AG04449 (cell line): ENCODE measurements at regions of chr5 and their contacts with region 1.

Region 1: GRCh38 chr5:143002459-143003328 is 232.5 kb downstream of the ARHGAP26 start:
- DNase-seq: peak; percentile 41
- H3K4me3 ChIP-seq: no peak overlapping the region
- CTCF ChIP-seq: peak; percentile 39

Region 2: DNA sequence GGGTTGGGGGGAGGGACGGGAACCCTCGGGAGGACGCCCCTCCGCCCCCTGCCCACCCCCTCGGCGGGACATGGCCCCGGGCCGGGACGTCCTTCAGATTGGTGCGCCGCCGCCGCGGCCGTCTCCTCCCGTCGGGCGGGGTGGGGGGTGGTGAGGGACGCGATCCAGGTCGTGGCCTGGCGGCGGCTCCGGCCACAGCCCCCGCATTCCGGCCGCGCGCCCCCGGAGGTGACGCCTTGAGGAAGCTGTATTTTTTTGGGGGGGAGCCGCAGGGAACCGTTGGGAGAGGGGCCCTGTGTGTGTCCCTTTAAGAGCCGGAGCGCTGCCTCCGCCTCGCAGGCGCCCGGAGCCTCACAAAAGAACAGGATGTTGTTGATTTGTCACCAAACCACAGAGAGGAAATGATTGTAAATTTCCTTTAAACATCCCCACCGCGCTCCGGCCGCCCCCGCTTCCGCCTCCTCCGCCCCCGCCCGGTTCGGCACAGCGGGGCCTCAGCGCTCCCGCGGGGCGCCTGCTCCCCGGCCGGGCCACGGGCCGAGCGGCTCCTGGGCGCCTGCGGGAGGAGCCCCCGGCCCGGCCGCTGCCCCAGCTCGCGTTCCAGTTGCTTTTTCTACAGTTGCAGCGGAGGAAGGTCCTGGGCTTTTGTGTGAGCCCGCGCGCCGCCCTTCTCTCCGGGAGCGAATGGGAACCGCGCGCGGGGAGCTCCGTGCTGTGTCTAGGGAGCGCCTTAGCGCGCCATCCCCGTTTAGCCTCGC is 645.8 kb before region 1 on chr5:
- CTCF ChIA-PET with region 1: no interaction called
- POLR2A ChIA-PET with region 1: no interaction called
- DNase-seq: no peak
- H3K4me3 ChIP-seq: peak overlapping the region; percentile 61
- CTCF ChIP-seq: no peak

Region 3: GRCh38 chr5:143403593-143404415 is 401.1 kb after region 1 on chr5 and contains the start of gene NR3C1:
- CTCF ChIA-PET with region 1: interaction called, 11 read pairs
- POLR2A ChIA-PET with region 1: no interaction called
- DNase-seq: no peak
- H3K4me3 ChIP-seq: peak within 1 kb of the TSS; percentile 80
- CTCF ChIP-seq: peak; percentile 75

Region 4: DNA sequence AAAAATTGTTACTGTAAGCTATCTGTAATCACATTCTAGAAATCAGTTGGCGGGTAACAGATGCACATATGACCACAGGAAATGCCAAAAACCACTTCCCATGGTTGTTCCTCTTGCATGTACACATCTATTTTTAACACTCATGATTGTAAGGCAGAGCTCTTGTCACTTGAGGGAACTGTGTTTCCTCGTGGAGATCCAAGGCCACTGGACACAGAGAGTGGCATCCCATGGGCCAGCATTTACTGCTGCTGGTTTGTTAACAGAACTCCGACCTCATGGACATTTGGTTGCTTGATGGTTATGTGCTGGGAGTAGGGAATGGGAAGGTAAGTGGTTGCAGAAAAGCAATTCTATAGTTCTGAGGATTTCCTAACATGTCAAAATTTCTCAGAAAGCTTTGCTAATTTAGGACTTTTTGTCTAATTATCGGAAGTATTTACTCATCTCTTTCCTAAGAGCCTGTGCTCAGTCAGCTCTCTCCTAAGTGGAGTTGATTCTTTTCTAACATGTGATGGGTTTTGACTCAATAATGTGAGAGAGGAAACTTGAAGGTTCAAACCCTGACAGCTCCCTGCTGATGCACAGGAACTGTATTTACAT is 602.8 kb after region 1 on chr5:
- CTCF ChIA-PET with region 1: no interaction called
- POLR2A ChIA-PET with region 1: no interaction called
- DNase-seq: no peak
- H3K4me3 ChIP-seq: no peak overlapping the region
- CTCF ChIP-seq: no peak